ENCODE measurements at regions of chr4 and their contacts with region 1.

Region 1: GRCh38 chr4:36775544-36775943 is 469.0 kb upstream of the NWD2 start:
- DNase-seq: no peak
- H3K4me3 ChIP-seq: no peak overlapping the region
- H3K27ac ChIP-seq: no peak overlapping the region
- H3K4me1 ChIP-seq: no peaks in the 10 kb centered on the region
- H3K27me3 ChIP-seq: no peaks in the 10 kb centered on the region
- CTCF ChIP-seq: no peak
- POLR2A ChIP-seq: no peak

Region 2: DNA sequence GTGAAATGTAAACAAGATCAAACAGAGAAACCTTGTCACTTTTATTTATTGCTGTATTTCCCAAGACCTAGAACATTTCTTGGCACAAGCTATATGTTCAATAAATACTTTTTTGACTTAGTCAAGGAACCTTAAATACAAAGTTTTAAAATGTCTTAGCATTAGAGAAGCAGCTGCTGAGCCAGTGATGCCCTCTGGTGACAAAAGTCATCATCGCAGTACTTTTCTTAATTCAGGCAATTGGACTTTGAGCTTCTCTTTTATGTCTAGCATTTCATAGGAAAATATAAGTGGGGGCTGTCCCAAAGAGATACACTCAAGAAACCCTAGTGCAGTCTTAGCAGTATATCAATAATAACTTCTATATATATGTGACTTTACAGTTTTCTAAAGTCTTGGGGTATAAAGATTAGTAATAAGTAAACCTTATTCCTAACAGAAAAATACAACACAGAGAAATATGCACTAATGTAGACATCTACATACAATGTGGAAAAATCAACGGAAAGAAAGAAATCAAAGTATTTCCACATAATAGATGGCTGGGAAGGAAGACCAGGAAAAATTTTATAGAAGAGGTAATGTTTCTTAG is 375.7 kb before region 1 on chr4:
- intact Hi-C with region 1: loop called (anchors 5 kb)
- DNase-seq: no peak
- H3K4me3 ChIP-seq: no peak overlapping the region
- H3K27ac ChIP-seq: no peak overlapping the region
- H3K4me1 ChIP-seq: no peaks in the 10 kb centered on the region
- H3K27me3 ChIP-seq: no peaks in the 10 kb centered on the region
- CTCF ChIP-seq: peak in 2 of 3 donors; percentile 11 to 43
- POLR2A ChIP-seq: no peak